Activated naive CD4-positive, alpha-beta T cell treated with anti-CD3 and anti-CD28 coated beads for 36 hours (primary cell): ENCODE measurements at regions of chr3 and their contacts with region 1.

Region 1: DNA sequence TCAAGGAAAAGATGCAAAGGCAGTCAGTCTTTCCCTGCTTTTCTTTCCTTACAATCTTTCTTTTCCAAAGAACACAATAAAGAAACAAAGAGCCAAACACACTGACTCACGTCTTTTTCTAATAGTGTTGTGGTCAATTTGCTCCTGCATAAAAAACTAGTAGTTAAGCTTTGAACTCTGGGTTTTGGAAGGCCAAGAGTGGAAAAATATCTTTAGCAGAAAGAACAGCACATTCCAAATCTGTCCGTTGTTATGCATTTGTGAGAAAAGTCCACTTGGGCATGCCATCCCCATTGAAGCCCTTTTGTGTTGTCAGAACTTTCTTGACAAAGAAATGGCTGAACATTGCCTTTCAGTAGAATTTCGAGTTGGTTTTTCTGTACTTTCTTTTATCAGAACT is 18.2 kb downstream of the COL8A1 start:
- DNase-seq: no peak
- H3K4me3 Mint-ChIP-seq: no peak overlapping the region
- H3K27ac Mint-ChIP-seq: no peak overlapping the region
- H3K4me1 Mint-ChIP-seq: no peaks in the 10 kb centered on the region
- H3K27me3 Mint-ChIP-seq: peaks cover 3% of the 10 kb centered on the region

Region 2: GRCh38 chr3:99645277-99646106 is 11.1 kb before region 1 on chr3:
- CTCF ChIA-PET with region 1: interaction called, 12 read pairs
- intact Hi-C with region 1: no loop called
- DNase-seq: no peak
- H3K4me3 Mint-ChIP-seq: no peak overlapping the region
- H3K27ac Mint-ChIP-seq: no peak overlapping the region
- H3K4me1 Mint-ChIP-seq: no peaks in the 10 kb centered on the region
- H3K27me3 Mint-ChIP-seq: peaks cover 20% of the 10 kb centered on the region

Region 3: GRCh38 chr3:99669879-99670555 is 13.4 kb after region 1 on chr3:
- CTCF ChIA-PET with region 1: no interaction called
- intact Hi-C with region 1: no loop called
- DNase-seq: no peak
- H3K4me3 Mint-ChIP-seq: no peak overlapping the region
- H3K27ac Mint-ChIP-seq: no peak overlapping the region
- H3K4me1 Mint-ChIP-seq: no peaks in the 10 kb centered on the region
- H3K27me3 Mint-ChIP-seq: peaks cover 11% of the 10 kb centered on the region